ENCODE measurements at regions of chr1 and their contacts with region 1.

Region 1: DNA sequence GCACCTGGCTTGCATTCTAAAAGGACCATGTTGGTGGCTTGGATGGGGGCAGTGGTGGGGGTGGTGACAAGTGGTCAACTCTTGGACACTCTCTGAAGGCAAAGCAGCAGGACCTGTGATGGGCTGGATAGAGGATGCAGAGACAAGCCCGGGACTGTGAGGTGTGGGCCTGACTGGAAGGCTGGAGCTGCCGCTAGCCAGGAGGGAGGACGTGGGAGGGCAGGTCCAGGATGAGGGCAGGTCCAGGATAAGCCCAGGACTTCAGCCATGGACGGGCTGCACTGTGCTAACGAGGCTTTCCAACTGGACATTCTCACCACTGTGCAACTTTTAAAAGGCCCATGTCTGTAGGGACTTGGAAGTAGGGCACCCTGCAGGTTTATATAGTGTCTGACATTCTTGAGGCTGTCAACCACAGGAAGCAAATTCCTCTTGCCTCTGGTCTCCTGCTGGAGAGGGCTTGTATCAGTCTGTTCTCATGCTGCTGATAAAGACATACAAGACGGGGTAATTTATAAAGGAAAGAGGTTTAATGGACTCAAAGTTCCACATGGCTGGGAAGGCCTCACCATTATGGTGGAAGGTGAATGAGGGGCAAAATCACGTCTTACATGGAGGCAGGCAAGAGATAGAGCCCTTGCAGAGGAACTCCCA is 8.3 kb upstream of the C1orf167 start:
- DNase-seq: no peak
- ATAC-seq: peak; percentile 41
- H3K4me3 ChIP-seq: no peak overlapping the region
- H3K27ac ChIP-seq: no peak overlapping the region
- H3K4me1 ChIP-seq: peaks cover 10% of the 10 kb centered on the region; the same call in 1 of the 2 replicates
- H3K27me3 ChIP-seq: no peaks in the 10 kb centered on the region
- CTCF ChIP-seq: no peak
- EP300 ChIP-seq: no peak
- POLR2A ChIP-seq: no peak
- RAD21 ChIP-seq: no peak

Region 2: GRCh38 chr1:11693024-11693590 is 60.6 kb before region 1 on chr1:
- CTCF ChIA-PET with region 1: no interaction called
- POLR2A ChIA-PET with region 1: no interaction called
- in situ Hi-C with region 1: loop called (anchors 10 kb)
- intact Hi-C with region 1: no loop called
- DNase-seq: no peak
- ATAC-seq: no peak
- H3K4me3 ChIP-seq: no peak overlapping the region
- H3K27ac ChIP-seq: no peak overlapping the region
- H3K4me1 ChIP-seq: peaks cover 15% of the 10 kb centered on the region
- H3K27me3 ChIP-seq: peaks cover 16 to 70% of the 10 kb centered on the region in 2 experiments
- CTCF ChIP-seq: no peak
- EP300 ChIP-seq: no peak
- POLR2A ChIP-seq: no peak
- RAD21 ChIP-seq: no peak